ENCODE measurements at regions of chr1 and their contacts with region 1.

Region 1: GRCh38 chr1:220046052-220046930 is at the start of gene EPRS1:
- DNase-seq: peak; percentile 96
- H3K4me3 ChIP-seq: peak within 1 kb of the TSS; percentile 70 to 93 (median 84)
- H3K27ac ChIP-seq: peak within 1 kb of the TSS; percentile 82 to 94 (median 90)
- H3K4me1 ChIP-seq: peaks cover 10 to 29% (median 28%) of the 10 kb centered on the region in 4 donors
- H3K27me3 ChIP-seq: no peaks in the 10 kb centered on the region
- CTCF ChIP-seq: peak; percentile 48 to 90 (median 60)
- EP300 ChIP-seq: no peak
- POLR2A ChIP-seq: peak; percentile 10
- total RNA-seq, gene EPRS1: 30.3 to 46.1 (median 40.9) TPM

Region 2: DNA sequence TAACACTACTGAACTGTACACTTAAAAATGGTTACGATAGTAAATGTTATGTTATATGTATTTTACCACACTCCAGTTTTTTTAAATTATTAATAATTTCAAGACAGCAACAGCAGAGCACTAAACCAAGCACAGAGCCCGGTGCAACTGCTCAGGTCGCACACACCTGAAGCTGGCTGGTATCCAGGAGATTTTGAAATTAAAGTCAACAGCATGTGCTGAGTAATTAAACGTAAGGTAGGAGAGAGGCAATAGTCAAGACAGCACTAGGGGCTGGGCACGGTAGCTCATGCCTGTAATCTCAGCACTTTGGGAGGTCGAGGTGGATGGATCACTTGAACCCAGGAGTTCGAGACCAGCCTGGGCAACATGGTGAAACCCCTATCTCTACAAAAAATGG is 82.9 kb before region 1 on chr1:
- intact Hi-C with region 1: no loop called
- DNase-seq: no peak
- H3K4me3 ChIP-seq: no peak overlapping the region
- H3K27ac ChIP-seq: no peak overlapping the region
- H3K4me1 ChIP-seq: no peaks in the 10 kb centered on the region
- H3K27me3 ChIP-seq: no peaks in the 10 kb centered on the region
- CTCF ChIP-seq: no peak
- EP300 ChIP-seq: no peak
- POLR2A ChIP-seq: no peak

Region 3: GRCh38 chr1:220089650-220090556 is 43.6 kb after region 1 on chr1 and contains the start of gene BPNT1:
- intact Hi-C with region 1: loop called (anchors 5 kb)
- DNase-seq: peak; percentile 97
- H3K4me3 ChIP-seq: peak within 1 kb of the TSS; percentile 49 to 69 (median 65)
- H3K27ac ChIP-seq: peak within 1 kb of the TSS; percentile 40 to 71 (median 60)
- H3K4me1 ChIP-seq: peaks cover 4 to 35% (median 23%) of the 10 kb centered on the region in 4 donors
- H3K27me3 ChIP-seq: no peaks in the 10 kb centered on the region
- CTCF ChIP-seq: no peak
- EP300 ChIP-seq: no peak
- POLR2A ChIP-seq: peak; percentile 38
- total RNA-seq, gene BPNT1: 11.2 to 14.3 (median 12.6) TPM

Region 4: GRCh38 chr1:220113136-220113695 is 66.9 kb after region 1 on chr1:
- intact Hi-C with region 1: no loop called
- DNase-seq: no peak
- H3K4me3 ChIP-seq: no peak overlapping the region
- H3K27ac ChIP-seq: no peak overlapping the region
- H3K4me1 ChIP-seq: peaks cover 0 to under 1% (median 0%) of the 10 kb centered on the region in 4 donors
- H3K27me3 ChIP-seq: no peaks in the 10 kb centered on the region
- CTCF ChIP-seq: peak in 2 of 3 experiments; percentile 29 to 57
- EP300 ChIP-seq: no peak
- POLR2A ChIP-seq: no peak

Measured in esophagus muscularis mucosa (tissue), 4 donors.